Activated T-helper 2 cell treated with anti-CD3 and anti-CD28 coated beads, Interferon-gamma antibody, Interleukin-2, Interleukin-4, amounts not matched to agents 10 μg/mL and 5 μg/mL and 100 μg/mL, durations not matched to agents 14 hours and 24 hours and 36 hours (primary cell): ENCODE measurements at regions of chr10 and their contacts with region 1.

Region 1: GRCh38 chr10:22714479-22715289 is at the start of gene PIP4K2A:
- DNase-seq: peak; percentile 70
- H3K4me3 Mint-ChIP-seq: peak within 1 kb of the TSS; percentile 85
- H3K27ac Mint-ChIP-seq: peak within 1 kb of the TSS; percentile 58
- H3K4me1 Mint-ChIP-seq: peaks cover 33% of the 10 kb centered on the region
- H3K27me3 Mint-ChIP-seq: peaks cover 6% of the 10 kb centered on the region
- total RNA-seq, gene PIP4K2A: 104 and 105 TPM in 2 replicates

Region 2: GRCh38 chr10:22615819-22616499 is 98.7 kb before region 1 on chr10:
- intact Hi-C with region 1: loop called (anchors 5 kb)
- DNase-seq: no peak
- H3K4me3 Mint-ChIP-seq: peak overlapping the region; percentile 23
- H3K27ac Mint-ChIP-seq: peak overlapping the region; percentile 45
- H3K4me1 Mint-ChIP-seq: peaks cover 83% of the 10 kb centered on the region
- H3K27me3 Mint-ChIP-seq: no peaks in the 10 kb centered on the region

Region 3: GRCh38 chr10:22648547-22648961 is 66.1 kb before region 1 on chr10:
- intact Hi-C with region 1: loop called (anchors 2 kb)
- DNase-seq: no peak
- H3K4me3 Mint-ChIP-seq: no peak overlapping the region
- H3K27ac Mint-ChIP-seq: peak overlapping the region; percentile 98
- H3K4me1 Mint-ChIP-seq: peaks cover 86% of the 10 kb centered on the region
- H3K27me3 Mint-ChIP-seq: no peaks in the 10 kb centered on the region

Region 4: GRCh38 chr10:22693371-22693784 is 21.3 kb before region 1 on chr10:
- intact Hi-C with region 1: loop called (anchors 1 kb)
- DNase-seq: no peak
- H3K4me3 Mint-ChIP-seq: peak overlapping the region; percentile 73
- H3K27ac Mint-ChIP-seq: peak overlapping the region; percentile 93
- H3K4me1 Mint-ChIP-seq: peaks cover 69% of the 10 kb centered on the region
- H3K27me3 Mint-ChIP-seq: no peaks in the 10 kb centered on the region

Region 5: GRCh38 chr10:22997102-22997501 is 282.4 kb after region 1 on chr10:
- intact Hi-C with region 1: no loop called
- DNase-seq: no peak
- H3K4me3 Mint-ChIP-seq: no peak overlapping the region
- H3K27ac Mint-ChIP-seq: no peak overlapping the region
- H3K4me1 Mint-ChIP-seq: peaks cover 1% of the 10 kb centered on the region
- H3K27me3 Mint-ChIP-seq: peaks cover 18% of the 10 kb centered on the region